Dorsolateral prefrontal cortex (tissue), 120 donors: ENCODE measurements at regions of chr6 and their contacts with region 1.

Region 1: DNA sequence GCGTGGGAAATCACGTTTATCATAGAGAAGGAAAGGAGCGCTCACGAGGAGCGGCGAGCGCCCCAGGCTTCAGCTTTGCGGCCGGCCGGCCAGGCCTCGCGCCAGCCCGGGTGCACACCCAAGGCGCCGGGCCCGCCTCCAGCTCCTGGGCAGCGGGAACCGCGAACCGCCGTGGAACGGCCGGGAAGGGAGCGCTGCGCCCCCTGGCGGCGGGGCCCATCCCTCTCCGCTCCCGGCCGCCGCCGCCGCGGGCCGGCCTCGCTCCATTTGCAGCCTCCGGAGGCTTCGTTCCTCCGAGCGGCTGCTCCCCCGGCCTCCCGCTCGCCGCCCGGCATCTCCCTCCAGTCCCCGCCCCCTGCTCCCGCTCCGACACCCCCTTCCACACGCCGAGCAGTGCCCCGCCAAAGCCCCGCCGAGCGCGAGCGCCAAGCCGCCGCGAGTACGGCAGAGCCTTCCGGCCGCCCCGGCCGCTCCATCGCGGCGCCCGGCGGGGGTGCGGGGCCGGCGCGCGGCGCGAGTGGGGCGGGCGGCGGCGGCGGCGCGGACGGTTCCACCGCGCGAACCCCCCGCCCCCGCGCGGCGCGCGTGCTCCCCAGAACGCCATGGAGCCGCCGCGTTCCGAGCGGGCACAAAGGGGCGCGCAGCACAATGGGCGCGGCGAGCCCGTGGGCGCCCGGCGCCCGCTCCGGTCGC is 956 bp downstream of the BEND3 start:
- DNase-seq: peak; percentile 44 to 89 (median 74)
- H3K4me3 ChIP-seq: peak overlapping the region; percentile 39 to 87 (median 71)
- H3K27ac ChIP-seq: peak overlapping the region in 57 of 59 donors; percentile 28 to 91 (median 75)
- H3K27me3 ChIP-seq: no peaks in the 10 kb centered on the region
- CTCF ChIP-seq: peak; percentile 57 to 98 (median 86)

Region 2: GRCh38 chr6:106997390-106998158 is 116.8 kb before region 1 on chr6:
- intact Hi-C with region 1: no loop called
- DNase-seq: peak in 1 of 10 donors; percentile 49
- H3K4me3 ChIP-seq: no peak overlapping the region
- H3K27ac ChIP-seq: no peak overlapping the region
- H3K27me3 ChIP-seq: peaks cover 0 to 5% (median 0%) of the 10 kb centered on the region in 45 donors
- CTCF ChIP-seq: peak; percentile 26 to 72 (median 57)

Region 3: DNA sequence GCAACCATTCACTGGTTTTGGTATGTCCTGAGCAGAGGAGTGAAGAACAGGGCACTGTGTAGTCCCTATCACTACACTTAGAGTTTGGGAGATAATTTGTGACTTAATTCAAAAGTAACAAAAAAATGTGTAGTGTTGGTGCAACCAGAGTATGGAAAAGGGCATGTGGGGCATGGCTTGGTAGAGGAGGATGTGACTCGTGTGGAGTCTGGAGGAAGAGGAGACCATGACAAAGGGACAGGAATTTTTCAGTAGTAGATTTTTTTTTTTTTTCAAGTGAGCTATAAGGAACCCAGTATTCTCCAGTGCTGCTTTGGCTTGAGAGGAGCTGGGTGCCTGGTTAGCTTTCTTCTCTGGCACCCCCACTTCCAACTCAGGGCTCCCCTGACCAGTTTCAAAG is 81.2 kb before region 1 on chr6:
- intact Hi-C with region 1: loop called (anchors 1 kb)
- DNase-seq: no peak
- H3K4me3 ChIP-seq: no peak overlapping the region
- H3K27ac ChIP-seq: no peak overlapping the region
- H3K27me3 ChIP-seq: no peaks in the 10 kb centered on the region
- CTCF ChIP-seq: no peak